HepG2 (cell line): ENCODE measurements at regions of chr16 and their contacts with region 1.

Region 1: GRCh38 chr16:47311738-47312505 is 148.9 kb downstream of the ITFG1 start:
- DNase-seq: no peak
- ATAC-seq: no peak
- H3K4me3 ChIP-seq: no peak overlapping the region
- H3K27ac ChIP-seq: no peak overlapping the region
- H3K4me1 ChIP-seq: no peaks in the 10 kb centered on the region
- H3K27me3 ChIP-seq: no peaks in the 10 kb centered on the region
- CTCF ChIP-seq: no peak
- EP300 ChIP-seq: no peak
- POLR2A ChIP-seq: no peak
- RAD21 ChIP-seq: no peak

Region 2: GRCh38 chr16:47342055-47342454 is 30.1 kb after region 1 on chr16:
- CTCF ChIA-PET with region 1: no interaction called
- POLR2A ChIA-PET with region 1: no interaction called
- in situ Hi-C with region 1: no loop called
- intact Hi-C with region 1: loop called (anchors 1 kb)
- DNase-seq: no peak
- ATAC-seq: no peak
- H3K4me3 ChIP-seq: no peak overlapping the region
- H3K27ac ChIP-seq: no peak overlapping the region
- H3K4me1 ChIP-seq: no peaks in the 10 kb centered on the region
- H3K27me3 ChIP-seq: no peaks in the 10 kb centered on the region
- CTCF ChIP-seq: no peak
- EP300 ChIP-seq: no peak
- POLR2A ChIP-seq: no peak
- RAD21 ChIP-seq: no peak

Region 3: GRCh38 chr16:47928008-47928407 is 616.1 kb after region 1 on chr16:
- CTCF ChIA-PET with region 1: no interaction called
- POLR2A ChIA-PET with region 1: no interaction called
- in situ Hi-C with region 1: no loop called
- intact Hi-C with region 1: loop called (anchors 5 kb)
- DNase-seq: peak; percentile 44
- ATAC-seq: peak; percentile 80
- H3K4me3 ChIP-seq: no peak overlapping the region
- H3K27ac ChIP-seq: no peak overlapping the region
- H3K4me1 ChIP-seq: no peaks in the 10 kb centered on the region
- H3K27me3 ChIP-seq: peaks cover 0 to 12% of the 10 kb centered on the region in 2 experiments; a peak in 2 of 5 replicates
- CTCF ChIP-seq: peak; percentile 56
- EP300 ChIP-seq: no peak
- POLR2A ChIP-seq: no peak
- RAD21 ChIP-seq: 0 out of 2 replicates have a peak, but pooled peaks have one; percentile 13